ENCODE measurements at regions of chr19 and their contacts with region 1.

Region 1: DNA sequence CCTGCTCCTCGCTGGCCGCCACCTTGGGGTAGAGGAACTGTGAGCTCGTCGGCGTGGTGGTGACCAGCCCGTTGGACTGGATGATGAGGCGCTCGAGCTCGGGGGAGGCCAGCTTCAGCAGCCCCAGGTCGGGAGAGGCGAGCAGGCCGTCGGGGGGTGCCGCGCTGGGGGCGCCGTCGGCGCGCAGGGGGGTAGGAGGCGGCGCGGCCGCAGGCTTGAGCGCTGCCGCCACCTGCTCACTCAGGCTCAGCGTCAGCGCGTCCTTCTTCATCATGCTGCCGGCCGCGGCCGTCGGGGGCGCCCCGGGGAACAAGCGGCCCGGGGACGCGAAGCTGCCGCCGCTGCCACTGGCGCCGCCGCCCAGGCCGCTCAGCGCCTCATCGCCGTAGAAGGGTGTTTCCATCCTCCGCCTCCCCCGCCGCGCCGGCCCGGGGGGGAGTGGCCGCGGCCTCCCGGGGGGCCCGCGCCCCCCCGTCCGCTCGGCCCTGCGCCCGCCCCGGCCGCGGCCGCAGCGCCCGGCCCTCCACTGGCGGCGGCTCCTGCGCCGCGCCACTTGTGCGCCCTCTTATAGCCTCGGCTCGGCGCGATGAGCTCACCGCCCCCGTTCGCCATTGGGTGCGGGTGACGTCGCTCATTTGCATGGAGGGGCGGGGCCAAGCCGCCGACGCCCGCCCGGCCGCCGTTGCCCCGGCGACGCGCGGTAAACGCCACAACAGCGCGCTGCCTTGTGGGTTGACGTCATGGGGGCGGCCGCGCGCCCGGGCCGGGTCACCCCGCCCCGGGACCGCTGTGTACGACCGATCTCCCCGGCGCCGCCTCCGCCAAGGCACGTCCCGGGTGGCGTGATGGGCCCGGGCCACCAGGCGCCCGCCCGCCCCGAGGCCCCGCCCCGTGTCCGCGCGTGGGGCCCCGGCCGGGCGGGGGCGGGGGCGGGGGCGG is at the start of gene JUND:
- DNase-seq: peak; percentile 98 to 99
- ATAC-seq: peak; percentile 57 to 82 (median 67)
- H3K4me3 ChIP-seq: peak within 1 kb of the TSS; percentile 92
- H3K4me3 Mint-ChIP-seq: peak within 1 kb of the TSS; percentile 99
- H3K27ac ChIP-seq: peak within 1 kb of the TSS; percentile 100
- H3K27ac Mint-ChIP-seq: peak within 1 kb of the TSS; percentile 97 to 99
- H3K4me1 ChIP-seq: peaks cover 40% of the 10 kb centered on the region
- H3K4me1 Mint-ChIP-seq: peaks cover 38 to 52% of the 10 kb centered on the region in 2 donors
- H3K27me3 ChIP-seq: no peaks in the 10 kb centered on the region
- H3K27me3 Mint-ChIP-seq: peaks cover 0 to 6% of the 10 kb centered on the region in 2 donors
- CTCF ChIP-seq: no peak
- total RNA-seq, gene JUND: 1,182 to 2,122 (median 1,520) TPM

Region 2: DNA sequence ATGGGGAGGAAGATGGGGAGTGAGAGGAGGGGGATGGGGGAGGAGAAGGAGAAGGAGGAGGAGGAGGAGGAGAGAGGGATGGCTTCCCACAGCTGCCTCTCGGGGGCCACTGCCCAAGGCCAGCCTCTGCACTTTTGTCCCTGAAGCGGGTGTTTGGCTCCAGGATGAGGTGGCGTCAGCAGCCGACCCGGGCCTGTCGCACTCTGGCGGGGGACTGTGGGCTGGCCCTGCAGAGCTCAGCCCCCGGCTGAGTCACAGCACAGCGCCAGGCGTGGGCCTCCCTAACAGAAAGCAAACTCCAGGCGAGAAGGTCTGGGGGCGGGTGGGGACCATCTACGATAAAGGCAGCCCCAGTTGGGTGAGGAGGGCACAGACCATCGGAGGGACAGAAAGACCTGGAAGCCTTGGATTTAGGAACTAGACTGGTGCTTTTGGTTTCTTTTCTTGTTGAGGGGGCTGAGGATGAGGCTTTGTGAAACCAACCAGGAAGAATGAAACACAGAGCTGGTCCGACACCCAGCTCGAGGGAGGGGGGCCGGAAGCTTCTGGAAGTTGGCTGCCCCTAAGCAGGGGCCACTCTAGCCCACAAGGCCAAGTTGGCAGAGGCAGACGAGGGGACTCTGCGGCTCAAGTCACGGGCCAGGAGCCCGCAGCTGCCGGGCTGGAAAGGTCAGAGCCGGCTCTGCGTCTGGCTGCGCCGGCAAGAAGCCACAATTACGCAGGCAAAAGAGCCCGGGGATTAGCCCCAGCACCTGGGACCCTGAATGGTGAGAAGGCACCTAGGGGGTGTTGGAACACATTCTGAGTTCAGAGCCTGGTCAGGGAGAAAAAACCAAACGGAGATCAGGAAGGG is 23.3 kb after region 1 on chr19:
- intact Hi-C with region 1: loop called (anchors 1 kb)
- DNase-seq: peak; percentile 82 to 89
- ATAC-seq: peak; percentile 78 to 87 (median 79)
- H3K4me3 ChIP-seq: peak overlapping the region; percentile 59
- H3K4me3 Mint-ChIP-seq: peak overlapping the region; percentile 86
- H3K27ac ChIP-seq: peak overlapping the region; percentile 99
- H3K27ac Mint-ChIP-seq: peak overlapping the region; percentile 96 to 97
- H3K4me1 ChIP-seq: peaks cover 64% of the 10 kb centered on the region
- H3K4me1 Mint-ChIP-seq: peaks cover 17 to 23% of the 10 kb centered on the region in 2 donors
- H3K27me3 ChIP-seq: no peaks in the 10 kb centered on the region
- H3K27me3 Mint-ChIP-seq: no peaks in the 10 kb centered on the region
- CTCF ChIP-seq: no peak

Region 3: DNA sequence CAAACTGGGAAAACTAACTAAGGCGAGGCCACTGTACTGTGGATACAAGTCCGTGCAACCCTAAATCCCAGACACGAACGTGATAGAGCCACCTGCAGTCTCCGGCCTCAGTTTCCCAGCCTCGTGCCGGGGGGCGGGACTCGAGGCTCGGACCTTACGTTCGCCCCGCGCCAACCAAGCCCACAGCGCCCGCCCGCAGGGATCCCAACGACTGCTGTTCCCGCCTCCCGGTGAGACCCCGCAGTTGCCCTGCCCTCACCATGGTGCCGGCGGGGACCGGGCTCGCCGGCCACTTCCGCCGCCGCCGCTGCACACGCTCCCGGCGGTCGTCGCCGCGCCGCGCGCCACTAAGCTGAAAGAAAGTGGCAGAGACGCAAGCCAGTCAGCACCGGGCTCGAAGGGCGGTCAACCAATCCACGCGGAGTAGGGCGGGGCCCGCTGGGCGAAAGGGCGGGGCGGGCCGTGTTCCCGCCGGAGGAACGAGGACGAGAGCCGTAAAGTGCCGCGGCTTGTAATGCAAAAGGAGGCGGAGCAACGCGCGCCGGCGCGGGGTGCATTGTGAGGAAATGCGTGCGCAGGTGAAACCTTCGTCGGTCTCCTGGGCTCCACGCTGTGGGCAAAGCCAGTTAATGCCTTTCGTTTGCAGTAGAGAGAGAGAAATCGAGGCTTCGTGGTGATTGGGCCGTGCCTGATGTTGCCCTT is 41.6 kb after region 1 on chr19 and contains the start of gene LSM4:
- intact Hi-C with region 1: loop called (anchors 1 kb)
- DNase-seq: peak; percentile 97 to 100
- ATAC-seq: peak; percentile 91 to 99 (median 92)
- H3K4me3 ChIP-seq: peak within 1 kb of the TSS; percentile 79
- H3K4me3 Mint-ChIP-seq: peak within 1 kb of the TSS; percentile 87
- H3K27ac ChIP-seq: peak within 1 kb of the TSS; percentile 91
- H3K27ac Mint-ChIP-seq: peak within 1 kb of the TSS; percentile 96
- H3K4me1 ChIP-seq: peaks cover 58% of the 10 kb centered on the region
- H3K4me1 Mint-ChIP-seq: peaks cover 48% of the 10 kb centered on the region in 2 donors
- H3K27me3 ChIP-seq: no peaks in the 10 kb centered on the region
- H3K27me3 Mint-ChIP-seq: no peaks in the 10 kb centered on the region
- CTCF ChIP-seq: peak; percentile 56
- total RNA-seq, gene LSM4: 42.4 to 60.8 (median 44.8) TPM

Region 4: GRCh38 chr19:18328340-18329034 is 47.1 kb after region 1 on chr19:
- intact Hi-C with region 1: loop called (anchors 1 kb)
- DNase-seq: peak; percentile 78 to 94
- ATAC-seq: peak; percentile 98 to 99 (median 98)
- H3K4me3 ChIP-seq: no peak overlapping the region
- H3K4me3 Mint-ChIP-seq: peak overlapping the region; percentile 45
- H3K27ac ChIP-seq: no peak overlapping the region
- H3K27ac Mint-ChIP-seq: peak overlapping the region; percentile 38 to 52
- H3K4me1 ChIP-seq: peaks cover 20% of the 10 kb centered on the region
- H3K4me1 Mint-ChIP-seq: peaks cover 15% of the 10 kb centered on the region in 2 donors
- H3K27me3 ChIP-seq: no peaks in the 10 kb centered on the region
- H3K27me3 Mint-ChIP-seq: no peaks in the 10 kb centered on the region
- CTCF ChIP-seq: peak; percentile 90

Region 5: DNA sequence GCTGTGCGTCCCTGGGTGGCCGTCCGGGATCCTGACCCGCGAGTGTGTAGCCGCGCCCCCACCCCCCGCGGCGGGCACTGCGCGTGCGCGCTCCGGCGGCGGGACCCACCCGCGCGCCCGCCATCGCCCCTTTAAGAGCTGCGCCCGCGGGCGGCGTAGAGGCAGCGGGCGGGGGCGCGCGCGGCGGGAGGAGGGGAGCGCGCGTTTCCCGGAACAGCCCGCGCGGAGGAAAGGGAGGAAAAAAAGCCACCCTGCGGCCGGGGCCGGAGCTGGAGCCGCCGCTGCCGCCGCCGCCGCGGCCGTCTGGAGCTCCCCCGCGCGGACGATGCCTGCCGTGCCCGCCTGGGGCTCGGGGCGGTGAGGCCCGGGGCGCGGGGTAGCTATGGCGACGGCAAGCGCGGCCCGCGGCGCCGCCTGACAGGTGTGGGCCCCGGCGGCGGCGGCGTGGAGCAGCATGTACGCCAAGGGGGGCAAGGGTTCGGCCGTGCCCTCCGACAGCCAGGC is 137.9 kb after region 1 on chr19 and contains the start of gene SSBP4:
- intact Hi-C with region 1: loop called (anchors 5 kb)
- DNase-seq: peak; percentile 79 to 83
- ATAC-seq: peak; percentile 27 to 56 (median 54)
- H3K4me3 ChIP-seq: peak within 1 kb of the TSS; percentile 73
- H3K4me3 Mint-ChIP-seq: peak within 1 kb of the TSS; percentile 91
- H3K27ac ChIP-seq: peak within 1 kb of the TSS; percentile 89
- H3K27ac Mint-ChIP-seq: peak within 1 kb of the TSS; percentile 91 to 97
- H3K4me1 ChIP-seq: peaks cover 90% of the 10 kb centered on the region
- H3K4me1 Mint-ChIP-seq: peaks cover 73 to 89% of the 10 kb centered on the region in 2 donors
- H3K27me3 ChIP-seq: no peaks in the 10 kb centered on the region
- H3K27me3 Mint-ChIP-seq: no peaks in the 10 kb centered on the region
- CTCF ChIP-seq: peak; percentile 11
- total RNA-seq, gene SSBP4: 137 to 169 (median 158) TPM